ENCODE measurements at regions of chr17 and their contacts with region 1.

Region 1: GRCh38 chr17:31241116-31241515 is 55.9 kb downstream of the OMG start:
- DNase-seq: no peak
- H3K4me3 ChIP-seq: no peak overlapping the region
- H3K27ac ChIP-seq: no peak overlapping the region
- H3K4me1 ChIP-seq: no peaks in the 10 kb centered on the region
- CTCF ChIP-seq: no peak

Region 2: GRCh38 chr17:31294820-31295488 is 53.8 kb after region 1 on chr17:
- CTCF ChIA-PET with region 1: no interaction called
- POLR2A ChIA-PET with region 1: no interaction called
- intact Hi-C with region 1: loop called (anchors 5 kb)
- DNase-seq: no peak
- H3K4me3 ChIP-seq: no peak overlapping the region
- H3K27ac ChIP-seq: no peak overlapping the region
- H3K4me1 ChIP-seq: no peaks in the 10 kb centered on the region
- CTCF ChIP-seq: no peak

Measured in OCI-LY7 (cell line).